Activated naive CD4-positive, alpha-beta T cell treated with anti-CD3 and anti-CD28 coated beads for 36 hours (primary cell): ENCODE measurements at regions of chr9 and their contacts with region 1.

Region 1: DNA sequence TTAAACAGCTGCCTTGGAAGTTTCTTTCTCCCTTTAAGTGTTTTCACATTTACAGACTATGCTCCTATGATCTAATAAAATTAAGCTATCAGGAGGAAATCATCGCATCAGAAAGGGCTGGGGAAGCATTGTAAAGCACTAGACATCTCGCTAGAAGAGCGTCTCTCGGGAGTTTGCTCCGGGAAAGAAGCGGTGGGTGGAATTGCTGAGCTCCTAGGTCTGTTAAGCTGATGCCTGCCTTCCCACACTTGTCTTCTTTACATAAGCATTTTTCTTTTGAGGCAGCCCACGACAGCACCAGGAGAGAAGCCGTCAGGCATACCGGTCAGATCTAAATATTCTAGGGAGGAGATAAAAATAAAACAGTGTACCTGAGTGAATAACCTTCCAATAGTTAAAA is 541.7 kb upstream of the TUSC1 start:
- DNase-seq: no peak
- H3K4me3 Mint-ChIP-seq: no peak overlapping the region
- H3K27ac Mint-ChIP-seq: no peak overlapping the region
- H3K4me1 Mint-ChIP-seq: no peaks in the 10 kb centered on the region
- H3K27me3 Mint-ChIP-seq: no peaks in the 10 kb centered on the region

Region 2: DNA sequence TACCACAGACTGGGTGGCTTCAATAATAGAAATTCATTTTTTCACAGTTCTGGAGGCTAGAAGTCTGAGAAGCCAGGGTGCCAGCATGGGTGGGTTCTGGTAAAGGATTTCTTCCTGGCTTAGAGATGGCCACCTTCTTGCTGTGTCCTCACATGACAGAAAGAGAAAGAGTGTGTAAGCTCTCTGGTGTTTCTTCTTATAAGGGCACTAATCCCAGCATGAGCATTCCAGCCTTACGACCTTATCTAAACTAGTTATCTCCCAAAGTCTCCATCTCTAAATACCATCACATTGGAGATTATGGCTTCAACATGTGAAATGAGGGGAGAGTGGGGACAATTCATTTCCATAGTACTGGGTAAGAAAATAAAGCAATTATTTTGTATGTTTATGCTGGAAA is 315.3 kb before region 1 on chr9:
- CTCF ChIA-PET with region 1: no interaction called
- intact Hi-C with region 1: no loop called
- DNase-seq: no peak
- H3K4me3 Mint-ChIP-seq: no peak overlapping the region
- H3K27ac Mint-ChIP-seq: no peak overlapping the region
- H3K4me1 Mint-ChIP-seq: no peaks in the 10 kb centered on the region
- H3K27me3 Mint-ChIP-seq: no peaks in the 10 kb centered on the region

Region 3: GRCh38 chr9:26169708-26170107 is 50.3 kb before region 1 on chr9:
- CTCF ChIA-PET with region 1: no interaction called
- intact Hi-C with region 1: loop called (anchors 10 kb)
- DNase-seq: no peak
- H3K4me3 Mint-ChIP-seq: no peak overlapping the region
- H3K27ac Mint-ChIP-seq: no peak overlapping the region
- H3K4me1 Mint-ChIP-seq: no peaks in the 10 kb centered on the region
- H3K27me3 Mint-ChIP-seq: no peaks in the 10 kb centered on the region

Region 4: DNA sequence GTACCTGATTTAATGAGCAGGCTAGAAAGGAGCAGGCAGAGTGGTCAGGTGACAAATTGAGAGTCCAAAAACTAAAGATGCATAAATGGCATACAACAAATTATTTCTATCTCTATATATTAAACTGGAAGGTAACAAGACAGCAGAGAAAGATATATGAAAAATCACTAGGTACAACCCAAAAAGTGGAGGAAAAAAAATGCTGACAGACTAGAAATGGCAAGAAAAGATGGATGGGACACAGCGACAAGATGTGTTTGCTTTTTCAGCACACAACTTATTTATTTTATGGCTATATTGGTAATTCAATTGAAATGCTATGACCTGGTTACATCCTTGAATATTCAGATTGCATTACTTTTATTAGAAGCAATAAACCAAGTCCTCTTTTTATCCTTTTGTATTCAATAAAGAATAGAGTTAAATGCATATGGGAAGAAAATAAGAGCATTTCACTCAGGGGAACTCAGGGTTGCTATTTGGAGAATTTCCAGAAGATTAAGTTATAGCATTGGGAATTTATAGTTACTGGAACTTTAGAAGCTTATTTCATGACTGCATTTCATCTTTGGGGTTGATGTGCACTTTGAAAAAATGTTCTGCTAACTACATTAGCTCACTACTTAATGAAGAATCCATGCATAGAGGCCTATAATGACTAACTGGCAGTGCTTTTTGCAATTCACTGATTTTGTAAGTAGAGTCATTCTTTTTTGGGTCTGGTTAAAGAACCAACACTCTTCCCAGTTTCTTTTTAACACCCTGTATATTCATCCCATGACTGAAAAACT is 24.9 kb after region 1 on chr9:
- CTCF ChIA-PET with region 1: no interaction called
- intact Hi-C with region 1: no loop called
- DNase-seq: no peak
- H3K4me3 Mint-ChIP-seq: no peak overlapping the region
- H3K27ac Mint-ChIP-seq: no peak overlapping the region
- H3K4me1 Mint-ChIP-seq: no peaks in the 10 kb centered on the region
- H3K27me3 Mint-ChIP-seq: no peaks in the 10 kb centered on the region

Region 5: DNA sequence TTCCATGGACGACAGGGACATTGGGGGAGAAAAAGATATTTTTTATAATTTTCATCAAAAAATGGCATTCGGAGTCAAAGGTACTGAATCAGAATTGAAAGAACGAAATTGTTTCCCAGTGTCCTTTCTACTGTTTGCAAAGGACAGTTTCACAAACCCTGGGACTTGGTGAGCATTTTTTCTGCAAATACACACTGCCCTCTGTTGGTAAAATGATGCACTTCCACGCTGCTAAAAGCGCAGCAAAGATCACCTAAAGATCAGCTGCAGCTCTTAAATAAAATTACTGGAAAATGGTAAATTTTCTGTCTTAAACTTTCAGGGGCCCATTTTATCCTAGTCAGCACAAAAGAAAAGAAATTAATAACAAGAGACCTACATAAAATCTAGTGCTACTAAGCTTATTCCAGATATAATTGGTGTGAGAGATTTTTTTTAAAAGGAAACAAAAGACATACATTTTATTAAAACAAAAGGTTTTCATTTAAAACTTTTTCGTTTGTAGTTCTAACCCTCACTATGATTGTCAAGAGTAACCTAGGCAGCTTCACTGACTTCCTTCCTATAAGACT is 106.6 kb after region 1 on chr9:
- CTCF ChIA-PET with region 1: no interaction called
- intact Hi-C with region 1: no loop called
- DNase-seq: peak; percentile 12
- H3K4me3 Mint-ChIP-seq: no peak overlapping the region
- H3K27ac Mint-ChIP-seq: no peak overlapping the region
- H3K4me1 Mint-ChIP-seq: no peaks in the 10 kb centered on the region
- H3K27me3 Mint-ChIP-seq: no peaks in the 10 kb centered on the region